ENCODE measurements at regions of chr12 and their contacts with region 1.

Region 1: DNA sequence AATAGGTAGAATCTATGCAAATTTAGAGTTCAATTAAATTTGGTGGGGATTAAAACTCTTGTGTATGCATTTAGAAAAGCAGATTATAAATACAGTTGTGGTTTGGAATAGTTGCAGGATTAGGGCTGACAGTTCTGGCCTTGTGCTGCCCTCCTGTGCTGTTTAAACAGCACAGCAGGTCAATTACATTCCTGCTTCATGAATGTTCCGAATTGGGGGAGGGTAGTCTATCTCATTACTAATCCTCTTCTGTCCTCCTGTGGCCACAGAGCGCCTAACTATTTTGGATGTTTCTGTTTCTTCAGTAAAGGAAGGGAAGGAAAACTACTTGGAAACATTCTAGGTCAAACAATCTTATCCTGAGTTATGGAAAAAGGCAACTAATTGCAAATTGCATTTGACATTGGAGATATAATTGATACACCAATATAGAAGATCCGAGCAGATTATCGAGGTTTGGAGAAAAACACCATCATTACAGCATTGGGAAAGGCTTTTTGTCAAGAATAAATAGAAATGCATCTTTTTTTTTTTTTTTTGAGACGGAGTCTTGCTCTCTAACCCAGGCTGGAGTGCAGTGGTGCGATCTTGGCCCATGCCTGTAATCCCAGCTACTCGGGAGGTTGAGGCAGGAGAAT is 8.7 kb upstream of the GPR19 start:
- DNase-seq: peak; percentile 84
- ATAC-seq: peak; percentile 99
- H3K4me3 ChIP-seq: no peak overlapping the region
- H3K27ac ChIP-seq: no peak overlapping the region
- H3K4me1 ChIP-seq: peaks cover 9 to 14% of the 10 kb centered on the region in 2 experiments
- H3K27me3 ChIP-seq: no peaks in the 10 kb centered on the region
- CTCF ChIP-seq: peak; percentile 78 to 99 (median 98)
- POLR2A ChIP-seq: no peak
- RAD21 ChIP-seq: peak; percentile 97

Region 2: GRCh38 chr12:11553871-11554533 is 1150.7 kb before region 1 on chr12:
- CTCF ChIA-PET with region 1: no interaction called
- POLR2A ChIA-PET with region 1: no interaction called
- RAD21 ChIA-PET with region 1: no interaction called
- intact Hi-C with region 1: loop called (anchors 10 kb)
- DNase-seq: peak; percentile 56
- ATAC-seq: peak; percentile 88
- H3K4me3 ChIP-seq: no peak overlapping the region
- H3K27ac ChIP-seq: no peak overlapping the region
- H3K4me1 ChIP-seq: no peaks in the 10 kb centered on the region
- H3K27me3 ChIP-seq: peaks cover 44% of the 10 kb centered on the region
- CTCF ChIP-seq: peak; percentile 52 to 68 (median 64); a peak in 5 of 6 replicates
- POLR2A ChIP-seq: no peak
- RAD21 ChIP-seq: peak; percentile 61

Region 3: GRCh38 chr12:12039897-12040296 is 664.8 kb before region 1 on chr12:
- CTCF ChIA-PET with region 1: interaction called, 3 read pairs
- POLR2A ChIA-PET with region 1: no interaction called
- RAD21 ChIA-PET with region 1: no interaction called
- intact Hi-C with region 1: loop called (anchors 2 kb)
- DNase-seq: no peak
- ATAC-seq: no peak
- H3K4me3 ChIP-seq: no peak overlapping the region
- H3K27ac ChIP-seq: no peak overlapping the region
- H3K4me1 ChIP-seq: no peaks in the 10 kb centered on the region
- H3K27me3 ChIP-seq: no peaks in the 10 kb centered on the region
- CTCF ChIP-seq: no peak
- POLR2A ChIP-seq: no peak
- RAD21 ChIP-seq: no peak

Region 4: DNA sequence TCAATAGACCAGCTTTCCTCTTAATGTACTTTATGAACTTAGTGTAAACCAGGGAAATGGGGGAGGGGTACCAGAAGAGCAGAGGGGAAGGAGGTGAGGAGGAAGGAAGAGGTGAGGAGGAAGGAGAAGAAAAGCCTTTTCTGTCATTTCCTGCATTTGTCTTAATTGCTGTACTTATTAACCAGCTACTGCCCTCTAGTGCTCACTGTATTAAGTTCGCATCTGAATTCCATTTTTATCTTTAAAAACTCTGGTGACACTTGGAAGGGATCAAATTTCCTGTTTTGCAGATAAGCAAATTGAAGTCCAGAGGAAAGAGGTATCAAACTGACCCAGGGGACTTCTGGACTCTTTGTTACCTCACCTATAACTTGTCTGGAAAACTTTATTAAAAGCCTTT is 376.9 kb before region 1 on chr12:
- CTCF ChIA-PET with region 1: no interaction called
- POLR2A ChIA-PET with region 1: no interaction called
- RAD21 ChIA-PET with region 1: no interaction called
- intact Hi-C with region 1: loop called (anchors 1 kb)
- DNase-seq: peak; percentile 62
- ATAC-seq: peak; percentile 80
- H3K4me3 ChIP-seq: no peak overlapping the region
- H3K27ac ChIP-seq: no peak overlapping the region
- H3K4me1 ChIP-seq: peaks cover 0 to 5% of the 10 kb centered on the region in 2 experiments; a peak in 1 of 4 replicates
- H3K27me3 ChIP-seq: no peaks in the 10 kb centered on the region
- CTCF ChIP-seq: peak; percentile 59 to 79 (median 78)
- POLR2A ChIP-seq: no peak
- RAD21 ChIP-seq: peak; percentile 83

Region 5: GRCh38 chr12:12562585-12563261 is 142.0 kb before region 1 on chr12 and contains the start of gene DUSP16:
- CTCF ChIA-PET with region 1: no interaction called
- POLR2A ChIA-PET with region 1: no interaction called
- RAD21 ChIA-PET with region 1: no interaction called
- intact Hi-C with region 1: loop called (anchors 10 kb)
- DNase-seq: peak; percentile 72
- ATAC-seq: peak; percentile 89
- H3K4me3 ChIP-seq: peak within 1 kb of the TSS; percentile 75 to 83
- H3K27ac ChIP-seq: peak within 1 kb of the TSS; percentile 89
- H3K4me1 ChIP-seq: peaks cover 16 to 24% of the 10 kb centered on the region in 2 experiments
- H3K27me3 ChIP-seq: no peaks in the 10 kb centered on the region
- CTCF ChIP-seq: no peak
- POLR2A ChIP-seq: peak; percentile 46
- RAD21 ChIP-seq: no peak
- total RNA-seq, gene DUSP16: 13.4 TPM